Endothelial cell of umbilical vein (primary cell): ENCODE measurements at regions of chr11 and their contacts with region 1.

Region 1: GRCh38 chr11:68297812-68298658 is 14.4 kb upstream of the LRP5 start:
- DNase-seq: peak; percentile 74
- H3K4me3 ChIP-seq: no peak overlapping the region
- H3K27ac ChIP-seq: no peak overlapping the region
- H3K4me1 ChIP-seq: peaks cover 3% of the 10 kb centered on the region
- H3K27me3 ChIP-seq: peaks cover 0 to 2% of the 10 kb centered on the region in 2 experiments
- CTCF ChIP-seq: peak; percentile 97 to 98
- POLR2A ChIP-seq: no peak

Region 2: GRCh38 chr11:68223275-68223674 is 74.8 kb before region 1 on chr11:
- CTCF ChIA-PET with region 1: no interaction called
- POLR2A ChIA-PET with region 1: no interaction called
- dilution Hi-C with region 1: no loop called
- intact Hi-C with region 1: no loop called
- DNase-seq: no peak
- H3K4me3 ChIP-seq: no peak overlapping the region
- H3K27ac ChIP-seq: no peak overlapping the region
- H3K4me1 ChIP-seq: no peaks in the 10 kb centered on the region
- H3K27me3 ChIP-seq: peaks cover 1 to 6% of the 10 kb centered on the region in 2 experiments
- CTCF ChIP-seq: no peak
- POLR2A ChIP-seq: no peak

Region 3: DNA sequence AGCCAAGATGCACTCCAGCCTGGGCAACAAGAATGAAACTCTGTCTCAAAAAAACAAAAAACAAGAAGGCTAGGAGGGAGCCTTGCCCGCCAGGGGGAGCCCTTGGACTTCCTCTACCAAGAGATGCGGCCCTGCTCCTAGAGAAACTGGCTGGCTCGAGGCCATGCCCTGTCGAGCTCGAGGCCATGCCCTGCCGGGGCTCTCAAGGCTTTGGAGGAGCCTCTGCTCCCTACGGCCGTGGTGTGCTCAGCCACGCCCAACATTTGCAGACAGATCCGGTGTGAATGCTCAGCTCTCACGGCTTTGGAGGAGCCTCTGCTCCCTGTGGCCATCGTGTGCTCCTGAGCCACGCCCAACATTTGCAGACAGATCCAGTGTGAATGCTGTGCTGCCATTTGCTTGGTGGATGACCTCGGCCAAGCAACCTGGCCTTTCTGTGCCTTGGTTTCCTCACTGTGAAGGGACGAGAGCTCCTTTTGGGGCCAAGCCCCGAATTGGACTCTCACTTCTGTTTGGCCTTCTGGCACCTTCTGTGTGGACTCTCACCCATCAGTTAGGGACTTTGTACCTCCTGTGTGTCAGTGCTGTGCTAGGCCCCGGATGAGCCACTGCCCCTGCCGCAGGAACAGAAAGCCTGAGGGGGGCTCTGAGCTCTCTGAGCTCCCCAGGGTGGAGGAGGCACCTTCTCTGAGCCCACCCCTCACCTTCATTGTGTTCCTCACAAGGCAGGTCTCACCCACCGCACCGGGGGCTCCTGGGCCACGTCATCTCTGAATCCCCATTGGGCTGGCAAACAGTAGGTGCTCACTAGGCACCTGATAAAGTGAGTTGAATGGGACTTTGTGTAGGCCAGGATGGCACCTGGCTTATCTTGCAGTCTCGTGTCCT is 40.3 kb before region 1 on chr11:
- CTCF ChIA-PET with region 1: interaction called, 152 read pairs
- POLR2A ChIA-PET with region 1: no interaction called
- dilution Hi-C with region 1: no loop called
- intact Hi-C with region 1: loop called (anchors 1 kb)
- DNase-seq: peak; percentile 78
- H3K4me3 ChIP-seq: no peak overlapping the region
- H3K27ac ChIP-seq: no peak overlapping the region
- H3K4me1 ChIP-seq: peaks cover 2% of the 10 kb centered on the region
- H3K27me3 ChIP-seq: no peaks in the 10 kb centered on the region
- CTCF ChIP-seq: peak; percentile 69 to 87
- POLR2A ChIP-seq: no peak

Region 4: GRCh38 chr11:68287419-68287818 is 10.6 kb before region 1 on chr11:
- CTCF ChIA-PET with region 1: interaction called, 18 read pairs
- POLR2A ChIA-PET with region 1: no interaction called
- dilution Hi-C with region 1: no loop called
- intact Hi-C with region 1: no loop called
- DNase-seq: peak; percentile 62
- H3K4me3 ChIP-seq: no peak overlapping the region
- H3K27ac ChIP-seq: no peak overlapping the region
- H3K4me1 ChIP-seq: no peaks in the 10 kb centered on the region
- H3K27me3 ChIP-seq: peaks cover 2 to 4% of the 10 kb centered on the region in 2 experiments
- CTCF ChIP-seq: no peak
- POLR2A ChIP-seq: no peak

Region 5: GRCh38 chr11:68383976-68384501 is 86.0 kb after region 1 on chr11:
- CTCF ChIA-PET with region 1: interaction called, 53 read pairs
- POLR2A ChIA-PET with region 1: no interaction called
- dilution Hi-C with region 1: no loop called
- intact Hi-C with region 1: loop called (anchors 1 kb)
- DNase-seq: peak; percentile 41
- H3K4me3 ChIP-seq: no peak overlapping the region
- H3K27ac ChIP-seq: no peak overlapping the region
- H3K4me1 ChIP-seq: peaks cover 33% of the 10 kb centered on the region
- H3K27me3 ChIP-seq: no peaks in the 10 kb centered on the region
- CTCF ChIP-seq: peak; percentile 90 to 93
- POLR2A ChIP-seq: no peak